Spleen (tissue), 13 donors: ENCODE measurements at regions of chr17 and their contacts with region 1.

Region 1: GRCh38 chr17:17496189-17497064 is at the start of gene RASD1:
- DNase-seq: peak; percentile 94
- H3K4me3 ChIP-seq: peak within 1 kb of the TSS; percentile 54 to 84 (median 68)
- H3K27ac ChIP-seq: peak within 1 kb of the TSS; percentile 71 to 88 (median 82)
- H3K4me1 ChIP-seq: peaks cover 18 to 61% (median 44%) of the 10 kb centered on the region in 6 donors
- H3K27me3 ChIP-seq: peaks cover 0 to 28% (median 17%) of the 10 kb centered on the region in 7 donors
- CTCF ChIP-seq: peak; percentile 49 to 100 (median 98)
- POLR2A ChIP-seq: peak; percentile 20 to 95 (median 82)
- total RNA-seq, gene RASD1: 6.6 to 52.3 (median 13.1) TPM

Region 2: GRCh38 chr17:17568749-17569195 is 72.3 kb after region 1 on chr17:
- intact Hi-C with region 1: loop called (anchors 5 kb)
- DNase-seq: peak; percentile 85
- H3K4me3 ChIP-seq: no peak overlapping the region
- H3K27ac ChIP-seq: no peak overlapping the region
- H3K4me1 ChIP-seq: peaks cover 0 to 52% (median 17%) of the 10 kb centered on the region in 6 donors
- H3K27me3 ChIP-seq: no peaks in the 10 kb centered on the region
- CTCF ChIP-seq: peak; percentile 14 to 78 (median 61)
- POLR2A ChIP-seq: no peak

Region 3: DNA sequence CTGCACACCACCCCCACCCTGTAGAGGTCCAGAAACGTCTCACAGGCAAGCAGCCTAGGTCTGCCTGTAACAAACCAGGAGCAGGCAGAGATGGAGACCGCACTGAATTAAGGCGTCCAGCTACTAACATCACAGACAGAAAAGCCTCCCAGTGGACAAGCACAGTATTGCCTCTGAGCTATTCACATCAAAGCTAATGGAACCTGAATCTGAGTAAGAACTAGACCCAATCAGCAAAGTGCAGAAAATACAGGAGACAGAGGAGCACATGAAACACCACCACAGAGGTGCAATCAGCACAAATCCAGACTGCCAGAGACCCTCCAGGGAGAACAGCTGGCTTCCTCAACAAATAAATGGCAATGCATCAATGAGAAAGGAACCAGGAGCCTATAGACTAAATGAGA is 117.3 kb after region 1 on chr17:
- intact Hi-C with region 1: loop called (anchors 10 kb)
- DNase-seq: no peak
- H3K4me3 ChIP-seq: no peak overlapping the region
- H3K27ac ChIP-seq: no peak overlapping the region
- H3K4me1 ChIP-seq: peaks cover 0 to 12% (median 1%) of the 10 kb centered on the region in 6 donors
- H3K27me3 ChIP-seq: no peaks in the 10 kb centered on the region
- CTCF ChIP-seq: peak; percentile 59 to 88 (median 74)
- POLR2A ChIP-seq: no peak

Region 4: GRCh38 chr17:17641621-17642409 is 145.4 kb after region 1 on chr17:
- intact Hi-C with region 1: loop called (anchors 2 kb)
- DNase-seq: peak; percentile 92
- H3K4me3 ChIP-seq: no peak overlapping the region
- H3K27ac ChIP-seq: no peak overlapping the region
- H3K4me1 ChIP-seq: peaks cover 0 to 20% (median 4%) of the 10 kb centered on the region in 6 donors
- H3K27me3 ChIP-seq: peaks cover 0 to 5% (median 0%) of the 10 kb centered on the region in 7 donors
- CTCF ChIP-seq: peak; percentile 88 to 97 (median 94)
- POLR2A ChIP-seq: no peak